Endothelial cell of umbilical vein (primary cell): ENCODE measurements at regions of chr11 and their contacts with region 1.

Region 1: GRCh38 chr11:29019960-29020683 is 911.9 kb downstream of the METTL15 start:
- DNase-seq: peak; percentile 80
- H3K4me3 ChIP-seq: no peak overlapping the region
- H3K27ac ChIP-seq: peak overlapping the region; percentile 97
- H3K4me1 ChIP-seq: peaks cover 31% of the 10 kb centered on the region
- H3K27me3 ChIP-seq: no peaks in the 10 kb centered on the region
- CTCF ChIP-seq: peak; percentile 50 to 70
- POLR2A ChIP-seq: peak; percentile 22

Region 2: DNA sequence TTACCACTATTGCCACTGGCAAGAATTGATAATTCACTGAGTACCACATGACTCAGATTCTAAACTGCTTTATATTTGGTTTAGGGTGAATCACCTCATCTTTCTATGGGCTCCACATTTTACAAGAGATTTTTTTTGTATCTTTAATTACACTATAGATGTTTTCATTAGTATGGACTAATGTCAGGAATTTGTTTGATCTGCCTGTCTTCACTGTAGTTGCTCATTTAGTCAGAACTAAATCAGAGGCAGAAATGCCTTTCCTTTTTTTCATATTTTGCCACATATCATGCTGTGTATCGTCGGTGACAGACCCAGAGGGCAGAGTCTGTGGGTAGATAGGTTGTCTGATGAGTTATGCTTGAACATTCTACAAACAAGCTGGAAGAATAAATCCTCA is 387.8 kb before region 1 on chr11:
- CTCF ChIA-PET with region 1: no interaction called
- POLR2A ChIA-PET with region 1: no interaction called
- dilution Hi-C with region 1: no loop called
- intact Hi-C with region 1: no loop called
- DNase-seq: no peak
- H3K4me3 ChIP-seq: no peak overlapping the region
- H3K27ac ChIP-seq: no peak overlapping the region
- H3K4me1 ChIP-seq: no peaks in the 10 kb centered on the region
- H3K27me3 ChIP-seq: no peaks in the 10 kb centered on the region
- CTCF ChIP-seq: no peak
- POLR2A ChIP-seq: no peak

Region 3: DNA sequence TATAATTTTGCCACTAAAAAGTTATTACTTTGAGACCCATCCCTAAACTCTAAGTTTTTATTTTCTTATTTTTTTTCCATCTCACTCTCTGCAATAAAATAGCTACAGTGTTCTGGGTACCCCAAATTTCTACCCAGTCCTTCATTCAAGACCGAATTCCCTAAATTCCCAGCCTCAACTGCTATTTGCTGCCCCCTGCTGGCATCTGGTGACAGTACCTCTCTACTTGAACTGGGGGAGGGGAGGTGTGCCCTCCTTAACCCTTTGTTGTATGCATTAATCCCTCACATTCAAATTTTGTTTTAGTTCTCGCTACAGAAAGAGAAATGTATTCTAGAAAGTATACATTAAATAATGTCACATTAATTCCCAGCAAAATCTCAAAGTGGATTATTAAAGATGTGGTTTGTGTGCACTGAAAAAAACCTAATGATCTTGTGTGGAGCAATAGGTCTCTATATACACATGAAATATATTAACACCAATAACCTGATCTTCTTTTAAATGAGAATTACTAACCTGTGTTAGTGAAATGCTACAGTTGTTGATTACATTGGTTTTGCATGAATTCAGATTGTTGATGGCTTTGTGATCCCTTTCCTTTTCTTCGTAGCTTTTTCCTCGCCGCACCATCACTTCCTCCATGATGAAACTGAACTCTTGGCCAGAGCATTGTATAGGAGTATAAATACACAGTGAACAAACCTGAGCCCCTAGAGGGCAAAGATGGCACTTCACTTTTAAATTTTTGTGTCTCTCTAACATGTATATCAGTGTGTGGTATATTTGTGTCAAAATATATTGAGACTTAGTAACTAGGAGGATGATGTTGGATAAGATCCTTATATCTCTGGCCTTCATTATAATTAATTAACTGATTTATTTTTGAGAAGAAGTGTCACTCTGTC is 321.9 kb before region 1 on chr11:
- CTCF ChIA-PET with region 1: interaction called, 7 read pairs
- POLR2A ChIA-PET with region 1: no interaction called
- dilution Hi-C with region 1: no loop called
- intact Hi-C with region 1: loop called (anchors 1 kb)
- DNase-seq: peak; percentile 60
- H3K4me3 ChIP-seq: no peak overlapping the region
- H3K27ac ChIP-seq: no peak overlapping the region
- H3K4me1 ChIP-seq: peaks cover 21% of the 10 kb centered on the region
- H3K27me3 ChIP-seq: no peaks in the 10 kb centered on the region
- CTCF ChIP-seq: peak; percentile 73 to 80
- POLR2A ChIP-seq: no peak

Region 4: DNA sequence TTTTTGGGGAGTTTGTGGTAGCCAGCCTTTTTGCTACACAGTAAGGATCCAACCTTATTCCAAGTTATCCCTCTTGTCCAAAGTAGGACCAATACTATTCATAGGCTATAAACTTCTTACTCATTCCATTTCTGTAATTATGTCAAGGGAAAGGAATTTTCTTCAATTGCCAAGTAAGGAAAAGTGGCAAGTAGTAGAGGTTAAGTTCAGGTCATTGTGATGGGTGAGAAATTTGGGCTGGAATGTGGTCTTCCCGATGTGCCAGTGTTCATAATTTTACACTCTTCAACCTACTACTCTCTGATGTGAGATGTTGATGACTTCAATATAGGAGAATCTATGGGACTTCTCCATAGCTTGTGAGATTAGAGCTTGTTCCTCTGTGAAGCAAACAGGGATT is 263.1 kb before region 1 on chr11:
- CTCF ChIA-PET with region 1: interaction called, 3 read pairs
- POLR2A ChIA-PET with region 1: interaction called, 3 read pairs
- dilution Hi-C with region 1: no loop called
- intact Hi-C with region 1: loop called (anchors 1 kb)
- DNase-seq: peak; percentile 83
- H3K4me3 ChIP-seq: peak overlapping the region in 1 of 3 experiments; percentile 42
- H3K27ac ChIP-seq: peak overlapping the region; percentile 90
- H3K4me1 ChIP-seq: peaks cover 39% of the 10 kb centered on the region
- H3K27me3 ChIP-seq: no peaks in the 10 kb centered on the region
- CTCF ChIP-seq: no peak
- POLR2A ChIP-seq: no peak

Region 5: GRCh38 chr11:29087200-29087812 is 67.2 kb after region 1 on chr11:
- CTCF ChIA-PET with region 1: no interaction called
- POLR2A ChIA-PET with region 1: no interaction called
- dilution Hi-C with region 1: no loop called
- intact Hi-C with region 1: no loop called
- DNase-seq: no peak
- H3K4me3 ChIP-seq: no peak overlapping the region
- H3K27ac ChIP-seq: no peak overlapping the region
- H3K4me1 ChIP-seq: no peaks in the 10 kb centered on the region
- H3K27me3 ChIP-seq: no peaks in the 10 kb centered on the region
- CTCF ChIP-seq: no peak
- POLR2A ChIP-seq: no peak

Region 6: DNA sequence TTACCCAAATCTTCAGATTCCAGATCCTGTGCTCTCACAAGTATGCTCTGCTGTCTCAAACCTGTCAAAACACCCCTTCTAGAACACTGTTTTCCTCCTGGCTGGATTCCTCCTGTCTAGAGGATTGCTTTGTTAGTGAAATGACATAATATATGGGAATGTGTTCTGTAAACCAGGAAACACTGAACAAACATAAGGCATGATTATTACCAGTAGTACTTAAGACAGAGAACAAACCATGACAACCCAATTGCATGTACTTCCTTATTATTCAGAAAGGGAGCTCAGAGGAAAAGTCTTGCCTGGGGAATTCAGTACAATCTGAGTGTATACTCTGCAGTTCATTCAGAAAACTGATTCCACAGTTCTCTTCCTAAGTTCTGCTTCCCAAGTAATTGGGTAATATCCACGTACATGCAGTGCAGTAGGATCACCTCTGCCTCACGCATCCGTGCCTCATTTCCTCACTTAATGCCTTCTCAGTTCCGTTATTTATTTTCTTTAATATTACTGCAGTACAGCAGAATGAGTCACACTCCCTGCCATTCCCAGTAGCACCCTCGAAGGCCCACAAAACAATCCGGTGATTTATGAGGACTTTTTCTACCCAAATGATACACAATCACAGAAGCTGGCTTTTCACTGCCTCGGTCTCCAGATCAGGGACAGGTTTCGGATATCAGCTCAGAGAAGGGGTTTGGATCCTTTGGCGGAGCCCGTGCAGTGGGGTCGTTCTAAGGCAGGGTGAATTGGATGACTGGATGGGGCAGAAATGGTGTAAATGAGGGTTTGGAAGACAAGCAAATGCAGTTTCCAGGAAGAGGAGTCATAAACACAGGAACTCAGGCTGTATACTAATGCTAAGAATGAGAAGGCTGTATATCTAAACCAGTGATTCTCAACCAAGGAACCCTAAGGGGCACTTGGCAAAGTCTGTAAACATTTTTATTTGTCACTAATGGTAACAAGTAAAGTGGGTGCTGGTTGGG is 99.9 kb after region 1 on chr11:
- CTCF ChIA-PET with region 1: interaction called, 20 read pairs
- POLR2A ChIA-PET with region 1: no interaction called
- dilution Hi-C with region 1: no loop called
- intact Hi-C with region 1: loop called (anchors 1 kb)
- DNase-seq: peak; percentile 99
- H3K4me3 ChIP-seq: peak overlapping the region in 2 of 3 experiments; percentile 25 to 62
- H3K27ac ChIP-seq: peak overlapping the region; percentile 100
- H3K4me1 ChIP-seq: peaks cover 33% of the 10 kb centered on the region
- H3K27me3 ChIP-seq: no peaks in the 10 kb centered on the region
- CTCF ChIP-seq: no peak
- POLR2A ChIP-seq: peak; percentile 74

Region 7: DNA sequence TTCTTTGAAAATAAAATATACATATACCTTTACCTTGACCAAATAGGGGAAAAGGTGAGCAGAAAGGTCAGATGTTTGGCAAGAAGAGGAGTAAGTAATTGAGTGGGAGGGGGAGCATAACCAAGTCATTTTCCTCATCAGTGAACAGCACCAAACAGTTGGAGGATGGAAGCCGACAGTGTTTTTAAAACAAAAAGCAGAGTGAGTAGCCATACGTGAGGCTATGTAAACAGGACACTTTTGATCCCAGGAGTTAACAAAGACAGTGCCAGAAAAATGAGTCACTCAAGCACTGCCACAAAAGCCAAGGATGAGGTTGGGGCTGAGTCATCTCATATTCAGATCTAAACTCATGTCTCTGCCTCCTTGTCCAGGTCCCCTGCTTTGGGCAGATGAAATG is 262.0 kb after region 1 on chr11:
- CTCF ChIA-PET with region 1: no interaction called
- POLR2A ChIA-PET with region 1: no interaction called
- dilution Hi-C with region 1: no loop called
- intact Hi-C with region 1: loop called (anchors 5 kb)
- DNase-seq: peak; percentile 92
- H3K4me3 ChIP-seq: no peak overlapping the region
- H3K27ac ChIP-seq: peak overlapping the region; percentile 38
- H3K4me1 ChIP-seq: peaks cover 17% of the 10 kb centered on the region
- H3K27me3 ChIP-seq: no peaks in the 10 kb centered on the region
- CTCF ChIP-seq: no peak
- POLR2A ChIP-seq: no peak